Esophagus squamous epithelium (tissue), 5 donors: ENCODE measurements at regions of chr9 and their contacts with region 1.

Region 1: DNA sequence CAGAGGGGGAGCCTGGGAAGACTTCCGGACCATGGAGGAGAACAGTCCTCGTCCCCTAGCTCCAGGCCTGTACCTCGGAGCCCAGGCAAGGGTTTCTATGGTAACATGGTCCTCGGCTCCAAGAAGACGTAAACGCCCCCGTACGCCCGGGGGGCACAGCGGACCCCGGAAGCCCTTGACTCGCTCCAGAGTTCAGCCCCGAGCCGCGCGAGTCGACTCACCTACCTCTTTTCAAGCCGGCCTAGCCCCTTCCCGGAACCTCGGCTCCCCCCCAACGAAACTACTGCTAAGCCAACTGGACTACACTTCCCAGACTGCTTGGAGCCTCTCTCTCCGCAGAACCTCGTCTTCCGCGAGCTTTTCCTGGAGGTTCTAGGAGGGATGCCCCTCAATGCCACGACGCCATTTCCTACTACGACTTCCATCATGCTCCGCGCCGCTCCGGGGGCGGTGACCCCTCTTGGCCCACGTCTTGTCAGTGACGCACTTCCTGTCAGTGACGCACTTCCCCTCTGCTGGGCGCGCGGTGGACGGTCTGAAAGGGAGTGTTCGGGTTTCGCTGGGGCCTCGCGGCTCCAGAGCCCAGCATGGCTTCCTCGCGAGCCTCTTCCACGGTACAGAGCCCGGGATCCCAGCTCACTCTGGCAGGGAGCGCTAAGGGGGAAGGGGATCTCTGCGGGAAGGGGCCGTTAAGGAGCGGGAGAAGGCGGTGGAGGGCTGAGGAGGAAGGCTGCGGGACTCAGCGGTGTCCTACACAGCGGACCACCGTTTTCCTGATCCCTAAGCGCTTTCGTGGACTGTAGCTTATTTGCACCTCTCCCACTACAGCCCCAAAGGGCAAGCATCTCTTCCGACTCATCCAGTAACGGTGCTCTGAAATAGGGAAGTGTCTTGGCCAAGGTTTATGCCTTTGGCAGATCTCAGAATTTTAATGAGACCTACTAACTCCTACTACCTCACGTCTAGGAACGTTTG is at the starts of genes CDC26 and PRPF4:
- DNase-seq: peak; percentile 82
- H3K4me3 ChIP-seq: peak within 1 kb of the TSS; percentile 58 to 96 (median 83)
- H3K27ac ChIP-seq: peak within 1 kb of the TSS; percentile 92 to 98 (median 94)
- H3K4me1 ChIP-seq: peaks cover 13 to 40% (median 16%) of the 10 kb centered on the region in 3 donors
- H3K27me3 ChIP-seq: no peaks in the 10 kb centered on the region
- CTCF ChIP-seq: peak in 1 of 6 experiments; percentile 20
- POLR2A ChIP-seq: peak in 3 of 4 donors; percentile 91 to 97 (median 92)
- total RNA-seq, gene CDC26: 20.5 to 42.4 (median 26.5) TPM
- total RNA-seq, gene PRPF4: 11.4 to 19.0 (median 17.4) TPM

Region 2: DNA sequence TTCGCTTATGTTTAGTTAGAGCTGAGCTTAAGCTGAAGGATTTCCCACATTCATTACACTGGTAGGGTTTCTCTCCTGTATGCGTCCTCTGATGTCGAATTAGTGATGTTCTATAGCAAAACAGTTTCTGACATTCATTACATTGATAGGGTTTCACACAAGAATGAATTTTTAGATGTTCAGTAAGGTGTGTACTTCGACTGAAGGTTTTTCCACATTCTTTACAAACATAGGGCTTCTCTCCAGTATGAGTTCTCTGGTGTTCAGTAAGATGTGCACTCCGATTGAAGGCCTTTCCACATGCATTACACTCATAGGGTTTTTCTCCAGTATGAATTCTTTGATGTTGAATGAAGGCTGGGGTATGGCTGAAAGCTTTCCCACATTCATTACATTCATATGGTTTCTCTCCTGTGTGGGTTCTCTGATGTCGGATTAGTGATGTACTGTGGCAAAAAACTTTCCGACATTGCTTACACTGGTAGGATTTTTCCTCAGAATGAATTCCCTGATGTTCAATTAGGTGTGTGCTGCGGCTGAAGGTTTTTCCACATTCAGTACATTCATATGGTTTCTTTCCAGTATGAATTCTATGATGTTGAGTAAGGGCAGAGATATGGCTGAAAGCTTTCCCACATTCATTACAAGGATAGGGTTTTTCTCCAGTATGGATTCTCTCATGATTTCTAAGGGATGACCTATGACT is 278.1 kb before region 1 on chr9:
- intact Hi-C with region 1: no loop called
- DNase-seq: no peak
- H3K4me3 ChIP-seq: no peak overlapping the region
- H3K27ac ChIP-seq: no peak overlapping the region
- H3K4me1 ChIP-seq: no peaks in the 10 kb centered on the region
- H3K27me3 ChIP-seq: no peaks in the 10 kb centered on the region
- CTCF ChIP-seq: no peak
- POLR2A ChIP-seq: no peak

Region 3: DNA sequence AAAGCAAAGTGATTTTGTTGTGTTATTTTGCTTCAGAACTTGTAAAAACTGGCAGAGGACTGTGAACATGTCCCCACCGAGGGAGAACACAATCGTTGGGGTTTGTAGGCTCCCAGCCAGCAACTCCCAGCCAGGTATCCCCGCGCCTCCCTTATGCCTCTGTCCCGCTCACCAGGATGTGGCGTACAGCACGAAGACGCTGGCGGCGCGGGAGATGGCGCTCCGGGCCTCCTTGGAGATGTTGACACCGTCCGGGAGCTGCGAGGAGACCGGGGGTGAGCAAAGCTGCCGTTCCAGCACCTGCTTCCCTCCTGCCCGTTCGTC is 134.4 kb after region 1 on chr9:
- intact Hi-C with region 1: loop called (anchors 5 kb)
- DNase-seq: no peak
- H3K4me3 ChIP-seq: peak overlapping the region; percentile 78 to 95 (median 90)
- H3K27ac ChIP-seq: peak overlapping the region; percentile 92 to 99 (median 96)
- H3K4me1 ChIP-seq: peaks cover 7 to 44% (median 10%) of the 10 kb centered on the region in 3 donors
- H3K27me3 ChIP-seq: no peaks in the 10 kb centered on the region
- CTCF ChIP-seq: no peak
- POLR2A ChIP-seq: no peak